ENCODE measurements at regions of chr2 and their contacts with region 1.

Region 1: GRCh38 chr2:181223234-181223633 is 234.0 kb upstream of the ITGA4 start:
- DNase-seq: no peak
- ATAC-seq: peak; percentile 42
- H3K4me3 Mint-ChIP-seq: no peak overlapping the region
- H3K27ac Mint-ChIP-seq: peak overlapping the region; percentile 79
- H3K4me1 Mint-ChIP-seq: peaks cover 19% of the 10 kb centered on the region
- H3K27me3 Mint-ChIP-seq: no peaks in the 10 kb centered on the region

Region 2: GRCh38 chr2:181165199-181165868 is 57.9 kb before region 1 on chr2:
- CTCF ChIA-PET with region 1: no interaction called
- POLR2A ChIA-PET with region 1: no interaction called
- intact Hi-C with region 1: no loop called
- DNase-seq: peak; percentile 36
- ATAC-seq: peak; percentile 85
- H3K4me3 Mint-ChIP-seq: peak overlapping the region; percentile 47
- H3K27ac Mint-ChIP-seq: peak overlapping the region; percentile 93
- H3K4me1 Mint-ChIP-seq: peaks cover 49% of the 10 kb centered on the region
- H3K27me3 Mint-ChIP-seq: no peaks in the 10 kb centered on the region

Region 3: DNA sequence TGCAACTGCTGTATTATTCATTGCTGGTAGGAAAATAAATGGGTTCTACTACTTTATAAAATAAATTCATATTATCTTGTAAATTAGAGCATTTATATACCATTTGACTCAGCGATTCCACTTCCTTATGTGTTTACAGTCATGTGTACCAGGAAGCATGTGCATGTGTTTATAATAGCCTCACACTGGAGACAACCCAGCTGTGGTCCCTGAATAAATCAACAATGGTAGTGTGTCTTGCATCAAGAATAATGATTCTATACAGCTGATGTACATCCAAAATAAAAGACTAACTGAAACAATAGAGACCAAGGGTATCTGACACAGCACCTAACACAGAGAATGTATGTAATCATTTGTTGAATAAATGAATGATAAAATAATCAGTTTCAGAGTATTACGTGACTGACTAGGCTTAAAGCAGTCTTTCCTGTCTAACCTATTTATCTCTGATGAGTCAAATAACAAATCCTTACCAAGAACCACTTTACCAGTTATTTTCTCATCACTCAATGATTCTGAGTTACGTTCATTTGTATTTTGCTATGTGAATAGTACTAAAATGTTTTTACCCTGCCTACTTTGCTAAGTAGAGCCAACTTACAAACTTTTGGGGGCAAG is 26.0 kb before region 1 on chr2:
- CTCF ChIA-PET with region 1: interaction called, 3 read pairs
- POLR2A ChIA-PET with region 1: no interaction called
- intact Hi-C with region 1: loop called in 1 of 2 experiments (anchors 2 kb)
- DNase-seq: no peak
- ATAC-seq: peak; percentile 57
- H3K4me3 Mint-ChIP-seq: no peak overlapping the region
- H3K27ac Mint-ChIP-seq: peak overlapping the region; percentile 34
- H3K4me1 Mint-ChIP-seq: peaks cover 35% of the 10 kb centered on the region
- H3K27me3 Mint-ChIP-seq: no peaks in the 10 kb centered on the region

Region 4: DNA sequence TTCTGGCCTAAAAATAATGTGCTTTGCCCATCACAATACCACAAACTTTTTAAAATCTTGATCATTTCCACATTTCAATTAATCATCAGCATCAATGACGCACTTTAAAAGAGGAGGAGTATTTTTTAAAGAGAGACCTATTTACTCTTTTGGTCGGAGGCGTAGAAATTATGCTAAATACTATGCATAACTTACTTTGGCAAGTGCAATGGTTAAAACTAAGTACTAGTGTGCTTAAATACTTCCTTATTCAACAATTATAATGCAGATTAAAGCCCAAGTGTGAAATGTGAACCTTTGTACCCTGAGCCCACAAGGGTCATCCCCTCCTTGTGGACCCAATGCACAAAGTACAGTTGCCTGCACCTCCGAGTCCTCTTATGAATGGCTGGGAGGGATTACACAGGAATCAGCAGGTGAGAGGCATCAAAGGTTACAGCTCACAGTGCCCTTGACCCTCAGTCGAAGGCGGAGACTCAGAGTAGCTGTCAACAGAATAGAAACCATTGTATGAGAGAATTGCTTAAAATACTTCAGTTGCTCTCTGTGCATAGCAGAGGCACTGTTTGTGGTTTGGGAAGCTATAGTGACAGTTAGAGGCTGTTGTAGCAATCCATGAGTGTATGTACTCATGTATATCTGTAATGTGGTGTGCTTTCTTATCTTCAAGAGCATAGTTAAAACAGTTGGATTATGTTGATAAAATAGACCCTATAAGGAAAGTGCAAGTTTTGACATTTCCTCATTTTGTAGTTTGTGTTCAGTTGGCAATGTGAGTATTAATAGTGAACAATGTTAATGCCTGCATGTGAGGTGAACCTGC is 82.3 kb after region 1 on chr2:
- CTCF ChIA-PET with region 1: no interaction called
- POLR2A ChIA-PET with region 1: no interaction called
- intact Hi-C with region 1: loop called in 1 of 2 experiments (anchors 5 kb)
- DNase-seq: peak; percentile 63
- ATAC-seq: peak; percentile 84
- H3K4me3 Mint-ChIP-seq: peak overlapping the region; percentile 60
- H3K27ac Mint-ChIP-seq: peak overlapping the region; percentile 91
- H3K4me1 Mint-ChIP-seq: peaks cover 74% of the 10 kb centered on the region
- H3K27me3 Mint-ChIP-seq: no peaks in the 10 kb centered on the region

Measured in activated CD4-positive, alpha-beta T cell treated with anti-CD3 and anti-CD28 coated beads for 36 hours (primary cell).